Activated B cell treated with CpG ODN at 0.5 μM for 24 hours (primary cell): ENCODE measurements at regions of chr5 and their contacts with region 1.

Region 1: GRCh38 chr5:40347981-40348725 is 331.6 kb upstream of the PTGER4 start:
- DNase-seq: no peak
- ATAC-seq: no peak
- H3K4me3 Mint-ChIP-seq: no peak overlapping the region
- H3K27ac Mint-ChIP-seq: no peak overlapping the region
- H3K4me1 Mint-ChIP-seq: no peaks in the 10 kb centered on the region
- H3K27me3 Mint-ChIP-seq: no peaks in the 10 kb centered on the region
- CTCF ChIP-seq: no peak

Region 2: GRCh38 chr5:39775458-39776365 is 572.4 kb before region 1 on chr5:
- CTCF ChIA-PET with region 1: no interaction called
- POLR2A ChIA-PET with region 1: no interaction called
- intact Hi-C with region 1: no loop called
- DNase-seq: no peak
- ATAC-seq: no peak
- H3K4me3 Mint-ChIP-seq: no peak overlapping the region
- H3K27ac Mint-ChIP-seq: no peak overlapping the region
- H3K4me1 Mint-ChIP-seq: no peaks in the 10 kb centered on the region
- H3K27me3 Mint-ChIP-seq: peaks cover 6% of the 10 kb centered on the region
- CTCF ChIP-seq: no peak

Region 3: GRCh38 chr5:39876146-39876545 is 472.0 kb before region 1 on chr5:
- CTCF ChIA-PET with region 1: no interaction called
- POLR2A ChIA-PET with region 1: no interaction called
- intact Hi-C with region 1: no loop called
- DNase-seq: no peak
- ATAC-seq: no peak
- H3K4me3 Mint-ChIP-seq: no peak overlapping the region
- H3K27ac Mint-ChIP-seq: no peak overlapping the region
- H3K4me1 Mint-ChIP-seq: no peaks in the 10 kb centered on the region
- H3K27me3 Mint-ChIP-seq: no peaks in the 10 kb centered on the region
- CTCF ChIP-seq: no peak

Region 4: DNA sequence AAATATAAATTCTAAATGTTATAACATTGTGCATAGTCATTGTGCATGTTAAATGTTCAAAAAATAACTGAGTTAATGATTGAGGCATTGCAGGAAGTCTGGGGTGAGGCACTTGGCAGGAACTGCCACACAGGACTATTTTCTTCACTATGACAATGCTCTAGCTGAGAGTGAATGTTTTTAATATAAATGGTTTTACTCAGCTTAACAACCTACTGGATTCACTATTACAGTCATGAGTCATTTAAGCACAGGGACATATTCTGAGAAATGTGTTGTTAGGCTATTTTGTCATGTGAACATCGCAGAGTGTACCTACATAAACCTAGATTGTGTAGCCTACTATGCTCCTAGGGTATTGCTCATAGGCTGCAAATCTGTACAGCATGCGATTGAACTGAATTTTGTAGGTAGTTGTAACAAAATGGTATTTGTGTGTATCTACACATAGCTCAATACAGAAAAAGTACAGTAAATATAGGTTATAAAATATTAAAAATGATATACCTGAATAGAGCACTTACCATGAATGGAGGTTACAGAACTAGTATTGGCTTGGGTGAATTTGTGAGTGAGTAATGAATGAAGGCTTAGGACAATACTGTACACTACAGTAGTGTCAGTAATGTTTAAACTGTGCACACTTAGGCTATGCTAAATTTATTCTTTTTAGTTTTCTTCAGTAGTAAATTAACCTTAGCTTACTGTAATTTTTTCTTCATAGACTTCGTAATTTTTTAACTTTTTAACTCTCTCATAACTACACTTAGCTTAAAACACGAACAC is 14.5 kb before region 1 on chr5:
- CTCF ChIA-PET with region 1: no interaction called
- POLR2A ChIA-PET with region 1: no interaction called
- intact Hi-C with region 1: loop called (anchors 2 kb)
- DNase-seq: no peak
- ATAC-seq: no peak
- H3K4me3 Mint-ChIP-seq: no peak overlapping the region
- H3K27ac Mint-ChIP-seq: no peak overlapping the region
- H3K4me1 Mint-ChIP-seq: no peaks in the 10 kb centered on the region
- H3K27me3 Mint-ChIP-seq: no peaks in the 10 kb centered on the region
- CTCF ChIP-seq: no peak